Activated CD4-positive, alpha-beta T cell treated with anti-CD3 and anti-CD28 coated beads, Interleukin-2, amount 10 ng/mL, durations not matched to agents 24 days and 14 days (primary cell): ENCODE measurements at regions of chr22 and their contacts with region 1.

Region 1: DNA sequence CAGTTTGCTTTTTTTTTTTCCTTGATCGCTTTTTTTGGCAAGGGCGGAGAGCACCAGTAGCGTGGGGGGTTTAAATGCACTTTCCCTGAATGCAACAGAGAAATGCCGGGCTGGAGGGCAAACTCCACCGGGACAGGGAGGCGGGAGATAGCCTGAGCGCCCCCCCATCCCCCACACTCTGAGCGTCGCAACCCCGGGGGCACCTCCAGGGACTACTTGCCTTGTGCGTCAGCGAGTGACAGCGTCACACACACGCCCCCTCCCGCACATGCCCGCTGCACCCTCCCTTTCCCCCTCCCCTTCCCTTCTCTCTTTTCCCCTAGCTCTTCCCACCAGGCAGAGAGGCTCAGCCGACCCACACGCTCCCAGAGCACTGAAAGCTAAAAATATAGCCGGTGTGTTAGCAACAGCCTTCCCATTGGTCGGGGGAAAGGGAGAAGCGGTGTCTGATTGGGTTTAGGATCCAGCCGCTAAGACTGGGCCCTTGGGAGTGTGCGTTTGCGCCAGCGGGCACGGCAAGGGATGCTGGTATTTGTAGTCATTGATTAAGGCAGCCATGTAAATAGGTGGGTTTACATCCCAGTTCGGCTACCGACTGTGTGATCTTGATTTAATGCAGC is 1.7 kb upstream of the TOB2 start:
- DNase-seq: peak; percentile 97
- H3K4me3 Mint-ChIP-seq: peak overlapping the region; percentile 96
- H3K27ac Mint-ChIP-seq: peak overlapping the region; percentile 95
- H3K4me1 Mint-ChIP-seq: peaks cover 21% of the 10 kb centered on the region
- H3K27me3 Mint-ChIP-seq: no peaks in the 10 kb centered on the region

Region 2: DNA sequence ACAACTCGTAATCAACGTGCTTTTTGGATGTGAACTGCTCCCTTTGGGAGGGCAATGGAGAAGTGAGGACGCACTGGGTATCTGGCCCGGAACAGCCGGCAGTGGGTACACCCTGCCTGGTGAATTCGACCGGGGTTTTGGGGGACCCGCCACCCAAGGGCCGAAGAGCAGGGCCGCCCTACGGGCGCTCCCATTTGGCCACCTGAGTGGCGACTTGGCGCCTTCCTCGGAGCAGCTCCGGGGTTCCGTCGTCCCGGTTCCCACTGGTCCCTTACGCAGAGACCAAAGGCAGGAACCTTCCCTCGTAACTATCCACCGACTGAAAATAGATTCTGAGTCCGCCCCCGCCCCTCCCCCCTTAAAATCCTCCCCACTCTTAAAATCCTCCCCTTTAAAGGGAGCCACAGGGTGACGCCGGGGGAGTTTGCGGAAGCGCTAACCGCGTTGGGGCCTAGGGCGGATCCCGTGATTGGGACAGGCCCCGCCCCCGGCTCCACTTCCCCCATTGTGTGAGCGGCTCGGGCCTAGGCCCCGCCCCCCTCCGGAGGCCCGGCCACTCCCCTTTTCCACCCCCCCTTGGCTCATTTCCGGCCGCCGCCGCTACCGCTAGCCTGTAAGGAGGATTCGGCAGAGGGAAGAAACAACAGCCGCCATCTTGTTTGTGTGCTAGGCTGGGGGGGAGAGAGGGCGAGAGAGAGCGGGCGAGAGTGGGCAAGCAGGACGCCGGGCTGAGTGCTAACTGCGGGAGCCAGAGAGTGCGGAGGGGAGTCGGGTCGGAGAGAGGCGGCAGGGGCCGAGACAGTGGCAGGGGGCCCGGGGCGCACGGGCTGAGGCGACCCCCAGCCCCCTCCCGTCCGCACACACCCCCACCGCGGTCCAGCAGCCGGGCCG is 356.9 kb before region 1 on chr22:
- intact Hi-C with region 1: loop called (anchors 10 kb)
- DNase-seq: peak; percentile 99
- H3K4me3 Mint-ChIP-seq: peak overlapping the region; percentile 90
- H3K27ac Mint-ChIP-seq: peak overlapping the region; percentile 99
- H3K4me1 Mint-ChIP-seq: peaks cover 26% of the 10 kb centered on the region
- H3K27me3 Mint-ChIP-seq: no peaks in the 10 kb centered on the region

Region 3: GRCh38 chr22:41381329-41382097 is 66.8 kb before region 1 on chr22 and contains the start of gene TEF:
- intact Hi-C with region 1: loop called (anchors 1 kb)
- DNase-seq: peak; percentile 99
- H3K4me3 Mint-ChIP-seq: peak within 1 kb of the TSS; percentile 95
- H3K27ac Mint-ChIP-seq: peak within 1 kb of the TSS; percentile 95
- H3K4me1 Mint-ChIP-seq: peaks cover 12% of the 10 kb centered on the region
- H3K27me3 Mint-ChIP-seq: peaks cover 3% of the 10 kb centered on the region
- total RNA-seq, gene TEF: 2.0 and 2.1 TPM in 2 replicates

Region 4: GRCh38 chr22:41468381-41469217 is 20.3 kb after region 1 on chr22 and contains the starts of genes ACO2 and PHF5A:
- intact Hi-C with region 1: loop called (anchors 1 kb)
- DNase-seq: peak; percentile 100
- H3K4me3 Mint-ChIP-seq: peak within 1 kb of the TSS; percentile 86
- H3K27ac Mint-ChIP-seq: peak within 1 kb of the TSS; percentile 97
- H3K4me1 Mint-ChIP-seq: peaks cover 35% of the 10 kb centered on the region
- H3K27me3 Mint-ChIP-seq: no peaks in the 10 kb centered on the region
- total RNA-seq, gene ACO2: 103 and 104 TPM in 2 replicates
- total RNA-seq, gene PHF5A: 90.3 and 98.3 TPM in 2 replicates

Region 5: GRCh38 chr22:41666661-41667258 is 218.5 kb after region 1 on chr22:
- intact Hi-C with region 1: loop called (anchors 5 kb)
- DNase-seq: peak; percentile 99
- H3K4me3 Mint-ChIP-seq: peak overlapping the region; percentile 83
- H3K27ac Mint-ChIP-seq: peak overlapping the region; percentile 92
- H3K4me1 Mint-ChIP-seq: peaks cover 9% of the 10 kb centered on the region
- H3K27me3 Mint-ChIP-seq: no peaks in the 10 kb centered on the region